Activated CD4-positive, alpha-beta memory T cell treated with anti-CD3 and anti-CD28 coated beads for 36 hours (primary cell): ENCODE measurements at regions of chr2 and their contacts with region 1.

Region 1: GRCh38 chr2:203730076-203730729 is 23.8 kb downstream of the CD28 start:
- DNase-seq: no peak
- H3K4me3 Mint-ChIP-seq: peak overlapping the region; percentile 47
- H3K27ac Mint-ChIP-seq: peak overlapping the region; percentile 99
- H3K4me1 Mint-ChIP-seq: peaks cover 93% of the 10 kb centered on the region
- H3K27me3 Mint-ChIP-seq: no peaks in the 10 kb centered on the region

Region 2: GRCh38 chr2:203718087-203718486 is 12.1 kb before region 1 on chr2:
- CTCF ChIA-PET with region 1: interaction called, 28 read pairs
- POLR2A ChIA-PET with region 1: interaction called, 196 read pairs
- intact Hi-C with region 1: loop called (anchors 1 kb)
- DNase-seq: peak; percentile 85
- H3K4me3 Mint-ChIP-seq: peak overlapping the region; percentile 69
- H3K27ac Mint-ChIP-seq: peak overlapping the region; percentile 94
- H3K4me1 Mint-ChIP-seq: peaks cover 96% of the 10 kb centered on the region
- H3K27me3 Mint-ChIP-seq: no peaks in the 10 kb centered on the region

Region 3: GRCh38 chr2:203751685-203752271 is 21.6 kb after region 1 on chr2:
- CTCF ChIA-PET with region 1: interaction called, 3 read pairs
- POLR2A ChIA-PET with region 1: interaction called, 60 read pairs
- intact Hi-C with region 1: no loop called
- DNase-seq: no peak
- H3K4me3 Mint-ChIP-seq: no peak overlapping the region
- H3K27ac Mint-ChIP-seq: peak overlapping the region; percentile 81
- H3K4me1 Mint-ChIP-seq: peaks cover 56% of the 10 kb centered on the region
- H3K27me3 Mint-ChIP-seq: no peaks in the 10 kb centered on the region

Region 4: GRCh38 chr2:203782262-203782976 is 52.2 kb after region 1 on chr2:
- CTCF ChIA-PET with region 1: interaction called, 4 read pairs
- POLR2A ChIA-PET with region 1: no interaction called
- intact Hi-C with region 1: loop called (anchors 1 kb)
- DNase-seq: peak; percentile 86
- H3K4me3 Mint-ChIP-seq: no peak overlapping the region
- H3K27ac Mint-ChIP-seq: peak overlapping the region; percentile 57
- H3K4me1 Mint-ChIP-seq: peaks cover 45% of the 10 kb centered on the region
- H3K27me3 Mint-ChIP-seq: no peaks in the 10 kb centered on the region

Region 5: GRCh38 chr2:203893401-203893800 is 163.2 kb after region 1 on chr2:
- CTCF ChIA-PET with region 1: no interaction called
- POLR2A ChIA-PET with region 1: interaction called, 3 read pairs
- intact Hi-C with region 1: loop called (anchors 5 kb)
- DNase-seq: no peak
- H3K4me3 Mint-ChIP-seq: peak overlapping the region; percentile 14
- H3K27ac Mint-ChIP-seq: peak overlapping the region; percentile 84
- H3K4me1 Mint-ChIP-seq: peaks cover 77% of the 10 kb centered on the region
- H3K27me3 Mint-ChIP-seq: no peaks in the 10 kb centered on the region

Region 6: GRCh38 chr2:203997980-203998809 is 268.0 kb after region 1 on chr2:
- CTCF ChIA-PET with region 1: no interaction called
- POLR2A ChIA-PET with region 1: no interaction called
- intact Hi-C with region 1: loop called (anchors 5 kb)
- DNase-seq: no peak
- H3K4me3 Mint-ChIP-seq: peak overlapping the region; percentile 21
- H3K27ac Mint-ChIP-seq: peak overlapping the region; percentile 82
- H3K4me1 Mint-ChIP-seq: peaks cover 65% of the 10 kb centered on the region
- H3K27me3 Mint-ChIP-seq: no peaks in the 10 kb centered on the region